Endothelial cell of umbilical vein (primary cell): ENCODE measurements at regions of chr3 and their contacts with region 1.

Region 1: DNA sequence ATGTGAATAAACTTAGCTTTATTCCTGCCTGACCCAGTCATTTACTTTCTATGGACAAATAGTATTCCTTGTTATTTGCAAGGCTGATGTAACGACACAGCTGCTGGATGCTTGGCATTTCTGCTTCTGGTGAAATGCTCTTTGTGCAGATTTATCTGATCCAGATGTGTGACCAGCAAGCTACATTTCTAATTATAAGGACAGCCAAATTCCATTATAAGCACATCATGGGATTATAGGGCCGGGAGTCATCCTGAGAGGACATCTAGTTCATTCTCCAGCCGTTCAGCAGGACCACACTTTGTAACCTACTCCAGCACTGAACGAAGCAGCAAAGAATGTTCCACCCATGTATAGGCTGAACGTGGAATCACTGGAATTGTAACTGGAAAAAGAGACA is 42.9 kb downstream of the FNDC3B start:
- DNase-seq: no peak
- H3K4me3 ChIP-seq: no peak overlapping the region
- H3K27ac ChIP-seq: no peak overlapping the region
- H3K4me1 ChIP-seq: peaks cover 4% of the 10 kb centered on the region
- H3K27me3 ChIP-seq: no peaks in the 10 kb centered on the region
- CTCF ChIP-seq: no peak
- POLR2A ChIP-seq: no peak

Region 2: GRCh38 chr3:172034786-172035685 is 47.2 kb before region 1 on chr3:
- CTCF ChIA-PET with region 1: no interaction called
- POLR2A ChIA-PET with region 1: no interaction called
- dilution Hi-C with region 1: no loop called
- intact Hi-C with region 1: no loop called
- DNase-seq: no peak
- H3K4me3 ChIP-seq: no peak overlapping the region
- H3K27ac ChIP-seq: no peak overlapping the region
- H3K4me1 ChIP-seq: peaks cover 9% of the 10 kb centered on the region
- H3K27me3 ChIP-seq: no peaks in the 10 kb centered on the region
- CTCF ChIP-seq: peak; percentile 25 to 39
- POLR2A ChIP-seq: no peak

Region 3: DNA sequence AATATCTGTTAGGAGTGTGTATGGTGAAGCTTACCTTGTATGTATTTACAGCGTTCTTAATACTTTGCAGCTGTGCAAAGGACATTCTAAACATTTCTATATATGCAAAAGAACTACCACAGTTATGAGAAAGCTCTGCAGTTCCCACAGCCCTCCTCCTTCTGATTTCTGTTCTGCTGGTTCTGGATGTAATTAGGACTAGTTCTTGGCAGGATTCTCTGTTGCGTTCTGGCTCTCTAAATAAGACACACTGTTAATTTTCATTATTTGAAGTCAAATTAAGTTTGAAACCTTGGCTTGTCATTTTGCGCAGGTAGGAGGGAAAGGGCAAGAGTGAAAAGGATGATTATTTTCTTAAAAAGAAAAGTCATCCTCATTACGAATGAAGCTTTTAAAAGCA is 33.5 kb after region 1 on chr3:
- CTCF ChIA-PET with region 1: no interaction called
- POLR2A ChIA-PET with region 1: no interaction called
- dilution Hi-C with region 1: loop called (anchors 5 kb)
- intact Hi-C with region 1: no loop called
- DNase-seq: no peak
- H3K4me3 ChIP-seq: no peak overlapping the region
- H3K27ac ChIP-seq: no peak overlapping the region
- H3K4me1 ChIP-seq: no peaks in the 10 kb centered on the region
- H3K27me3 ChIP-seq: no peaks in the 10 kb centered on the region
- CTCF ChIP-seq: no peak
- POLR2A ChIP-seq: no peak

Region 4: DNA sequence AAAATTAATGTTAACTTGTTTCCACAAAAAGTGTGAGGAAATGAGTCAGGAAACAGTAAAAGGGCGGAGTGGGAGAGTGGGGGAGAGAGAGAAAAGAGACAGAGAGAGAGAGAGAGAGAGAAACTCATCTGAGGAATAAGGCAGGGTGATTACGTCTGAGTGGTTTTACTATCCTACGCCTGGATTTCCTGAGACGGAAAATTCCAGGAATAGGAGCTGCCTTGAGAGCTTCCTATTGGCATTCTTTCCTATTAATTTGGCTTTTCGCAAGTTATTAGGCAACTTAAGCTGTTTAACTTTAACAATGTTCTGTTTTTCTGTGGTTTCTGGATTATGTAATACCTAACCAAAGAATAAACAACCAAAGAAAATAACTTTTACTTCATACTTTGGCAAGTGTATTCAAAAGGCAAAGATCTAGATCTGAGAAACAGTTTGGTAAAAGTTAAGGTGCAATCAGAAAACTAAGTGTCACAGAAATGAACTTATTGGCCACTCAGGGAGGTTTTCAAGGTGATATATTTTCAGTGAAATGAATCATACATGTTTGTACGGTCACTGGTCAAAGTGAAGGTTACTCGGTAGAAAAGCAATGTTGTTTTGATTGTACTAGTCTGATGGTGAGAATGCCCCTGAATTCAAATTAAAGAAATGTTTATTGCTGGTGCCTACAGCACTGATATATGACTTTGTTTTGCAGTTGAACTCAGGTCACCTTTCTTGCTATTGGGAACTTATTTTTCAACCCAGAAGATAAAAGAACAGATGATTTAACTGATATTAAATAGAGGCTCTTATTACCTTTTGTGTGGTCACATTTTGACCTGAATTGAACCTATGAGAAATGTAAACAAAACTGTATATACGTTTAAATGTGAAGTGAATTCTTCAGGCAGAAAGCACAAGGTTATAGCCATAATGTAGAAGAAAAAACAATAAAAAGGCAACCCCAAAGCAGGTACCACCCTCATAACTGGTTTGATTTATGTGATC is 480.9 kb after region 1 on chr3:
- CTCF ChIA-PET with region 1: no interaction called
- POLR2A ChIA-PET with region 1: no interaction called
- dilution Hi-C with region 1: no loop called
- intact Hi-C with region 1: no loop called
- DNase-seq: peak; percentile 90
- H3K4me3 ChIP-seq: peak overlapping the region in 2 of 3 experiments; percentile 22 to 35
- H3K27ac ChIP-seq: peak overlapping the region; percentile 75
- H3K4me1 ChIP-seq: peaks cover 15% of the 10 kb centered on the region
- H3K27me3 ChIP-seq: no peaks in the 10 kb centered on the region
- CTCF ChIP-seq: no peak
- POLR2A ChIP-seq: peak; percentile 26